ENCODE measurements at regions of chr6 and their contacts with region 1.

Region 1: DNA sequence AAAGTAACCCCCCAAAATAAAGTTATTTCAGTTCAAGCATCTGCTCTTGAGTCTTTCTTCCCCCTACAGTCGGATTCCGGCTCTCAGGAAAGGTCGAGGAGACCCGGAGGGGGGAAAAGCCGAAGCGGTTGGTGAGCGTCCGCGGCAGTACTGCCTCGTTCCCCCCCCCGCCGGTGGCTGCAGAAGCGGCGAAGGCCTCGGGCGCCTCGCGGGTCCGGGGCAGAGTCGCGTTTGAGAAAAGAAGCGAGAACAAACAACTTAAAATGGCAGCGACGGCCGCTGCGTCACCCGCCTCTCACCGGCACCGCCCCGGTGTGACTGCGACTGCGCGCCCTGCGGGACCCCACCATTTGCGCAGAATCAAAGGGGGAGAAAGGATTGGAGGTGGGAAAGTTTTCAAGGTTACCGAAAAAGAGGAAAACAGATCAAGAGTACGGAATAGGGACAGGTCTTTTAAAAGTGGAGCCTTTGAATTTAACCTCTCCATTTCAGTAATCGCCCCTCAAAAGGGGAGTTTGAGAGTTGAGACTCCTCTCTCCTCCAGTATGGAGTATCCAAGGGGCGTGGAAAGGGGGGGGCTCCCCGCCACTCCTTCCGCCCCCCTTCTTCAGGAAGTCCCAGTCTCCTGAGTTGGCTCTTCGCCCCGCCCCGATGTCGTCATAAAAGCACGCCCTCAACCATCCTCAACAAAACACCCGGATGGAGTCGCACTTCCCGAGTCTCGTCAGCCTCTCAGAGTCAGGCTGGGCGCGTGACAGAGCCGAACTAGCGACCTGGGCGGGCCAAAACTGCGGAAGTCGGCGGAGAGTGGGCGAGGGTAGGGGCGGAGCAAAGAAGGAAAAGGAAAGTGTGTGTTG is 1.9 kb upstream of the C6orf62 start:
- DNase-seq: peak; percentile 100
- H3K4me3 ChIP-seq: peak overlapping the region; percentile 86 to 92
- H3K27ac ChIP-seq: peak overlapping the region; percentile 96 to 99
- H3K4me1 ChIP-seq: peaks cover 4 to 15% of the 10 kb centered on the region in 2 donors
- H3K27me3 ChIP-seq: no peaks in the 10 kb centered on the region
- CTCF ChIP-seq: peak in 1 of 3 experiments; percentile 11

Region 2: GRCh38 chr6:24524805-24525204 is 196.0 kb before region 1 on chr6:
- intact Hi-C with region 1: no loop called
- DNase-seq: no peak
- H3K4me3 ChIP-seq: no peak overlapping the region
- H3K27ac ChIP-seq: no peak overlapping the region
- H3K4me1 ChIP-seq: no peaks in the 10 kb centered on the region
- H3K27me3 ChIP-seq: no peaks in the 10 kb centered on the region
- CTCF ChIP-seq: peak in 1 of 3 experiments; percentile 5

Region 3: DNA sequence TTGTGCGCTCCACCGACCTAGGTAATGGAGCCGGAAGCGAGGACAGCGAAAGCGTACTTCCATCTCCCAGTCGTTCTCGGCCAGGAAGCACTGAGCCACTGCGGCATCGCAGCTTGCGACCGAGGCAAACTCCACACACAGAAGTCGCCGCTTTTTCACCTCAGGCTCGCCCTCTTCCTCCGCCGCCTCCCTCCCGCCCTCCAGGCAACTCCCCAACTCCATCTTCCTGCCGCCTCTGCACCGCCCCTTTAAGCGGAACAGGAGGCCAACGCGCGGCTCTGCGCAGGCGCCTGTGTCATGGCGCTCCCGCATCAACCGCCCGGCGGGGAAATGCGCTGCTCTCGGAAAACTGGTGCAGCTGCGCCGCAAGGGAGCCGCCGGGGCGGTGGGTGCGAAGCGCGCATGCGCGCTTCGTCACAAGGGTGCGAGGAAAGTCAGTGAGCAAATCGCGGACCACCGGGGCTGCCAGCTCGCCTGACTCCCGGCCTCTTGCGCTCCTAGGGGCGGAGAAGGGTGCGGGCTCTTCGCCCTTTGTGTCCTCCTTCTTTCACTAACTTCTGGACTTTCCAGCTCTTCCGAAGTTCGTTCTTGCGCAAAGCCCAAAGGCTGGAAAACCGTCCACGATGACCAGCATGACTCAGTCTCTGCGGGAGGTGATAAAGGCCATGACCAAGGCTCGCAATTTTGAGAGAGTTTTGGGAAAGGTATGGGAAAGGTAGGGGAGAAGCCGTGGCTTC is 54.0 kb before region 1 on chr6 and contains the starts of genes ACOT13 and TDP2:
- intact Hi-C with region 1: loop called (anchors 2 kb)
- DNase-seq: peak; percentile 86 to 98
- H3K4me3 ChIP-seq: peak within 1 kb of the TSS; percentile 85 to 99
- H3K27ac ChIP-seq: peak within 1 kb of the TSS; percentile 90 to 95
- H3K4me1 ChIP-seq: peaks cover 4 to 13% of the 10 kb centered on the region in 2 donors
- H3K27me3 ChIP-seq: no peaks in the 10 kb centered on the region
- CTCF ChIP-seq: peak; percentile 50 to 74 (median 52)
- total RNA-seq, gene ACOT13: 3.1 TPM
- total RNA-seq, gene TDP2: 5.6 TPM

Region 4: DNA sequence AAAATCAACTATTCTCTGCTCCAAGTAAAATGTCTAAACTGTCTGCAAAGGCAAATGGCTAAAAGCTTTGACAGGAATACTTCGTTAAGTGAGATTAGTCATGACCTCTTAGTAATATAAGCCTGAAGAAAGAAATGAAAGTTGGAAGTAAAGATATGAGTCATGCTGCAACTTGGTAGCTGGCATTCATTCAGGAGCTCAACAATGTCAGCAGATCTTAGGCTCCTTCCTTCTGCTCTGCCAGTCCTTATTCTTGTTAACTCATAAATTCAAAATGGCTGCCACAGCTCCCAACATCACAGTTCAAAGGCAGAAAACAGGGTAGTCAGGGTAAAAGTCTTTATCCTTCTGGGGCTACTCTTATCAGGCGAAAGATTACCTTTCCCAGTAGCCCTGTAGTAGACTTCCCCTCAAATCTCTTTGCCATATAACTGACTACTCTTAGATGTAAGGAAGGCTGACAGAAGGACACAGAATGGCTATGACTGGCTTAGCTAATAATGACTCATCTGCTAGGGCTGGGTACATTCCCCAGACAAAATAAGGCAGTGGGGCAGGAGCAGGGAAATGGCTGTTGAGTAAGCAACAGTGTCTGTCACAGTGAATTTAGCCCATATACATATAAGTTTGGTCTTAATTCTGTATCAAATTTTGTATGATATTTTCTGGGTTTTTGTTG is 22.6 kb after region 1 on chr6:
- intact Hi-C with region 1: loop called (anchors 2 kb)
- DNase-seq: peak in 1 of 2 donors; percentile 67
- H3K4me3 ChIP-seq: peak overlapping the region in 1 of 2 donors; percentile 24
- H3K27ac ChIP-seq: peak overlapping the region; percentile 9 to 34
- H3K4me1 ChIP-seq: no peaks in the 10 kb centered on the region
- H3K27me3 ChIP-seq: no peaks in the 10 kb centered on the region
- CTCF ChIP-seq: no peak

Region 5: GRCh38 chr6:24763578-24763977 is 42.7 kb after region 1 on chr6:
- intact Hi-C with region 1: no loop called
- DNase-seq: no peak
- H3K4me3 ChIP-seq: no peak overlapping the region
- H3K27ac ChIP-seq: no peak overlapping the region
- H3K4me1 ChIP-seq: no peaks in the 10 kb centered on the region
- H3K27me3 ChIP-seq: no peaks in the 10 kb centered on the region
- CTCF ChIP-seq: no peak

Region 6: DNA sequence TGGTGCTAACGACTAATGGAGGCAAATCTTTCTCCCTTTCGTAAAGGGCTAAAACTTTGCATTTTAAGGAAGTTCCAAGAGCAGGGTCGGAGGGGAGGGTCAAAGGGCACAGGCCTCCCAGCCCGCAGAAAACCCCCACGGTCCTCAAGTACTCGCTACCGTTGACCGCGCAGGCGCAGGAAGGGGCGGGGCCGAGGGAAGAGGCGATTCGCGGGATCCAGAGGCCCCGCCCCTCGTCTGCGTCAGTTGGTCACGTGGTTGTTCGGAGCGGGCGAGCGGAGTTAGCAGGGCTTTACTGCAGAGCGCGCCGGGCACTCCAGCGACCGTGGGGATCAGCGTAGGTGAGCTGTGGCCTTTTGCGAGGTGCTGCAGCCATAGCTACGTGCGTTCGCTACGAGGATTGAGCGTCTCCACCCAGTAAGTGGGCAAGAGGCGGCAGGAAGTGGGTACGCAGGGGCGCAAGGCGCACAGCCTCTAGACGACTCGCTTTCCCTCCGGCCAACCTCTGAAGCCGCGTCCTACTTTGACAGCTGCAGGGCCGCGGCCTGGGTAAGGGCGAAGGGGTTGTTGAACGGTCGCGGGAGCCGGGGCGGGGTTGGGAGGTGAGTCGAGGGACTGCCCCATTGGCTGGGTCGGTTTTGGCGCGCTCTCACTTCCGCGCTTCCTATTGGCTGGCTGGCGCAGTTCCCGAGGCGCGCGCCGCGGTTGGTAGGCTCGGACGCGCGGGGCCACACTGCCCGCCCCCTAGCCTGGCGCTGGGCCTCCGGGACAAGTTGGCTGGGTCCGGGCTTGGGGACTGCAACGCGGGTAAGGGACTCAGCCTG is 54.1 kb after region 1 on chr6 and contains the start of gene GMNN:
- intact Hi-C with region 1: loop called (anchors 1 kb)
- DNase-seq: peak; percentile 81 to 98
- H3K4me3 ChIP-seq: peak within 1 kb of the TSS; percentile 85 to 98
- H3K27ac ChIP-seq: peak within 1 kb of the TSS; percentile 86 to 95
- H3K4me1 ChIP-seq: peaks cover 0 to 9% of the 10 kb centered on the region in 2 donors
- H3K27me3 ChIP-seq: no peaks in the 10 kb centered on the region
- CTCF ChIP-seq: no peak
- total RNA-seq, gene GMNN: 8.1 TPM